BJ (cell line): ENCODE measurements at regions of chr2 and their contacts with region 1.

Region 1: DNA sequence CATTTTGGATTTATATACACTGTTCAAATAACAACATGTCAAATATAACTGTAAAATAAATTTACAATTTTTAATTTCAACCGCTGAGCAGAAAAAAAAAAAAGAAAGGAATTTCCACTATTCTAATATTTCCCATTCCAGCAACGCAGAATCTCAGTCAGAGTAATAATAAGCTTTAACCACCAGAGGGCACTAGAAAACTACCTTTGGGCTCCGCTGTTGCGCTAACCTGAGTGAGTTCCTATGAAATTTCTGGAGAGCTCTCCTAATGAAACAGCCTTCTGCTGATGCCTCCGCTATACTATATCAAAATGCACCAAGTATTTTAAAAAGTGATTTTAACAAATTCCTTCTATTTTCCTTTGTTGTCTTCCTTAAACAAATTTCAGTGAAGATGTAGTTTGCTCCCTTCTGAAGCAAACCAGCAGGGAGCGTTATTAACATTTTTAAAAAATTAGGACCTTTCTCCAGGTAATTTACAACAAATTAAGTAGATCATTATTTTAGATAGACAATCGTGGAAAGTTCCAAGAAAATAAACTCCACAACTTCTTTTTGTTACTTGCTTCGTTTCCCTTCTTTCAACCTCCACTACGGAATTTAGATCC is 23.0 kb downstream of the ERMN start:
- DNase-seq: no peak
- H3K4me3 ChIP-seq: no peak overlapping the region
- H3K27me3 ChIP-seq: no peaks in the 10 kb centered on the region
- CTCF ChIP-seq: peak; percentile 70

Region 2: DNA sequence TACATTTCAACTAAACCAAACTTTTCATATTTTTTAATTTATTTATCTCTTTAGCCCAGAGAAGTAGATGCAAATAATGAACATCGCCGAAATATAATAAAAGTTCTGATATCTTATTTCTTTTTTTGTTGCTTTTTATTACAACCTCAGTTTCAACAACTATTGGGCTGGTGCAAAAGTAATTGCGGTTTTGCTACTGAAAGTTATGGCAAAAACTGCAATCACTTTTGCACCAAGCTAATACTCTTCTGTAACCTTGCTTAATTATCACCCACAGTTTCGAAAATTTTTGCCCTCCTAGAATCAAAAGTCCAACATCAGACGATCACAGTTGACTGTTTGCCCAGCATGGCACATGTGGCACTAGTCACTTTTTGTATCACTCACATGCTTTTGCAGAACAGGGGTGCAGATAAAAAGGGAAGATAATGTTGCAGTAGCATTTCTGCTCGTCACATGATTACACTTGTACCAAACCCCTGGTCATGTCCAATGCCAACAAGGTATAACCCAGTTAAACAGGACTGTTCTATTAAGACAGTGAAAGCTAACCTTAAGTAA is 287.5 kb before region 1 on chr2:
- CTCF ChIA-PET with region 1: no interaction called
- POLR2A ChIA-PET with region 1: no interaction called
- DNase-seq: no peak
- H3K4me3 ChIP-seq: no peak overlapping the region
- H3K27me3 ChIP-seq: no peaks in the 10 kb centered on the region
- CTCF ChIP-seq: no peak

Region 3: DNA sequence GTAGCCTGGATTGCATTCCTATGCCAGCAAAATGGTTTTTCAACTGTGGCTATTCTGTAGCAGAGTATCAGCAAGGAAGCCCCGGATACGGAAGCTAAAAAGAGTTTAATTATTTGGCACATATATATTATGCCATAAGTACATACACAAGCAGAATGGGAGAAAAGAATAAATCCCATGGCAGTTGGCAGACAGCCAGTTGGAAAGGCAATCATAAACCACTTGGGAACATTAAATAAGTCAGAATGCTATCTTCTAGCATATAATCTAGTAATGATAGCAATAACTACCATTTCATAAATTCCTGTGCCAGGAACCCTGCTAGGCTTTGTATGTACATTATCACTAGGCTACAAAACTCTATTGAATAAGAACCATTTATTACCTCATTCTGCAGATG is 19.1 kb before region 1 on chr2:
- CTCF ChIA-PET with region 1: interaction called, 22 read pairs
- POLR2A ChIA-PET with region 1: no interaction called
- DNase-seq: no peak
- H3K4me3 ChIP-seq: no peak overlapping the region
- H3K27me3 ChIP-seq: no peaks in the 10 kb centered on the region
- CTCF ChIP-seq: no peak